ENCODE measurements at regions of chr7 and their contacts with region 1.

Region 1: DNA sequence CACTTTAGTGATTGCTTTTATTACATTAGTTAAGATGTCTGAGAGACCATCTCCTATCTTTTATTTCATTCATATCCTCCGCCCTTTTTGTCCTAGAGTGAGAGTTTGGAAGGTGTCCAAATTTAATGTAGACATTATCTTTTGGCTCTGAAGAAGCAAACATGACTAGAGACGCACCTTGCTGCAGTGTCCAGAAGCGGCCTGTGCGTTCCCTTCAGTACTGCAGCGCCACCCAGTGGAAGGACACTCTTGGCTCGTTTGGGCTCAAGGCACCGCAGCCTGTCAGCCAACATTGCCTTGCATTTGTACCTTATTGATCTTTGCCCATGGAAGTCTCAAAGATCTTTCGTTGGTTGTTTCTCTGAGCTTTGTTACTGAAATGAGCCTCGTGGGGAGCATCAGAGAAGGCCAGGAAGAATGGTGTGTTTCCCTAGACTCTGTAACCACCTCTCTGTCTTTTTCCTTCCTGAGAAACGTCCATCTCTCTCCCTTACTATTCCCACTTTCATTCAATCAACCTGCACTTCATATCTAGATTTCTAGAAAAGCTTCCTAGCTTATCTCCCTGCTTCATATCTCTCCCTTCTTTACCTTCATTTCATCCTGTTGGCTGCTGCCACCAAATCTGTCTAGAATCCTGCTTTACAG is 10.4 kb upstream of the CLCN1 start:
- DNase-seq: peak; percentile 70
- H3K4me3 Mint-ChIP-seq: no peak overlapping the region
- H3K27ac Mint-ChIP-seq: no peak overlapping the region
- H3K4me1 Mint-ChIP-seq: no peaks in the 10 kb centered on the region
- H3K27me3 Mint-ChIP-seq: no peaks in the 10 kb centered on the region
- CTCF ChIP-seq: peak; percentile 50

Region 2: GRCh38 chr7:143181349-143181748 is 124.2 kb before region 1 on chr7:
- CTCF ChIA-PET with region 1: no interaction called
- POLR2A ChIA-PET with region 1: no interaction called
- intact Hi-C with region 1: no loop called
- DNase-seq: no peak
- H3K4me3 Mint-ChIP-seq: no peak overlapping the region
- H3K27ac Mint-ChIP-seq: no peak overlapping the region
- H3K4me1 Mint-ChIP-seq: no peaks in the 10 kb centered on the region
- H3K27me3 Mint-ChIP-seq: peaks cover 31% of the 10 kb centered on the region
- CTCF ChIP-seq: no peak

Region 3: GRCh38 chr7:143372070-143372469 is 66.5 kb after region 1 on chr7:
- CTCF ChIA-PET with region 1: interaction called, 11 read pairs
- POLR2A ChIA-PET with region 1: interaction called, 3 read pairs
- intact Hi-C with region 1: no loop called
- DNase-seq: peak; percentile 96
- H3K4me3 Mint-ChIP-seq: no peak overlapping the region
- H3K27ac Mint-ChIP-seq: peak overlapping the region; percentile 13
- H3K4me1 Mint-ChIP-seq: peaks cover 37% of the 10 kb centered on the region
- H3K27me3 Mint-ChIP-seq: no peaks in the 10 kb centered on the region
- CTCF ChIP-seq: peak; percentile 15

Measured in MCF 10A (cell line).